ENCODE measurements at regions of chr3 and their contacts with region 1.

Region 1: GRCh38 chr3:53150247-53151085 is 10.5 kb upstream of the PRKCD start:
- DNase-seq: no peak
- H3K4me3 ChIP-seq: no peak overlapping the region
- CTCF ChIP-seq: no peak

Region 2: DNA sequence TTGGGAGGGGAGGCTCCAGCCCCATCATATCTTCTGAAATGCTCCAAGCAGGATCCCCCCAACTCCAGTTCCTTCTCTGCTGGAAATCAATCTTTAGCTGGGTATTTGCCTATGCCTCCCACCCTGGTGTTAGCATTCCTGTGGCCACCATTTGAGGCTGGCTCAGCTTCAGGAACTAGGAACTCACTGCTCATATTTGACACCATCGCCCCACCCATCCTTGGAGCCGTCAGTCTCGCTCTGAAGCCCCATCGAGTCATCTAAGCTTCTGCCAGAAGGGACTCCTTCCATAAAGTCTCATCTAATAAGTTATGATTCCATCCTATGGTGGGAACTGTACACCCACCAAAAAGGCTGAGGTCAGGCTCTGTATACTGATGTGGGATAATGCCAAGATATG is 37.0 kb after region 1 on chr3:
- in situ Hi-C with region 1: loop called (anchors 5 kb)
- DNase-seq: no peak
- H3K4me3 ChIP-seq: no peak overlapping the region
- CTCF ChIP-seq: no peak